Aorta (tissue), 5 donors: ENCODE measurements at regions of chrX and their contacts with region 1.

Region 1: GRCh38 chrX:55160685-55161552 is 59.2 kb upstream of the PAGE5 start:
- DNase-seq: peak; percentile 94 to 95
- ATAC-seq: peak; percentile 99
- H3K4me3 ChIP-seq: peak overlapping the region; percentile 28 to 29
- H3K27ac ChIP-seq: peak overlapping the region in 1 of 2 donors; percentile 58
- H3K4me1 ChIP-seq: no peaks in the 10 kb centered on the region
- H3K27me3 ChIP-seq: no peaks in the 10 kb centered on the region

Region 2: DNA sequence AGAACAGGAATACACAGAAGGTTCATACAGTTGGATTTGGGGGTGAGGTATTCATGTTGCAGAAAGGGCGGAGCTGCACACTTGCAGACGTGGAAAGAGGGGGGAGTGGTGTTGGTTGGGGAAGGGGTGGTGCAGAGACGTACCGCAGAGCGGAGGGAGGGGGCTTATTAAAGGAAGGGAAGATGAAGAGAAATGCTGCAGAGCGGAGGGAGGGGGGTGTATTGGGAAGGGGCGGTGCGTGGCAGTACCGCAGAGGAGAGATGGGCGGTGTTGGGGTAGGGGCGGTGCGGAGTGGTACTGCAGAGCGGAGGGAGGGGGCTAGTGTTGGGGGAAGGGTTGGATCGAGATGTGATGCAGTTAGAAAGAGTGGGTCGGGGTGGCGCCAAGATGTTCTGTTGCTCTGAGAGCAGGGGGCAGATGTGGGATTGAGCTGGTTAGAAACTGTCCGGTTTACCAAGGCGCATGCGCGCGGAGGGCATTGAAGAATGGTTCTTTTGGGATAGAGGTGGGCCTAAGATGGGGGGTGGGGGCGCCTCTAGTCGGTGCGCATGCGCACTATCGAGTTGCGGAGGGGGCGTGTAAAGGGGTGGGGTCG is 239.4 kb before region 1 on chrX:
- intact Hi-C with region 1: loop called in 1 of 2 experiments (anchors 10 kb)
- DNase-seq: peak; percentile 81 to 88
- ATAC-seq: peak; percentile 88
- H3K4me3 ChIP-seq: peak overlapping the region; percentile 15 to 33
- H3K27ac ChIP-seq: no peak overlapping the region
- H3K4me1 ChIP-seq: no peaks in the 10 kb centered on the region
- H3K27me3 ChIP-seq: no peaks in the 10 kb centered on the region

Region 3: GRCh38 chrX:54934890-54935289 is 226.0 kb before region 1 on chrX:
- intact Hi-C with region 1: no loop called
- DNase-seq: no peak
- ATAC-seq: no peak
- H3K4me3 ChIP-seq: no peak overlapping the region
- H3K27ac ChIP-seq: no peak overlapping the region
- H3K4me1 ChIP-seq: no peaks in the 10 kb centered on the region
- H3K27me3 ChIP-seq: no peaks in the 10 kb centered on the region

Region 4: DNA sequence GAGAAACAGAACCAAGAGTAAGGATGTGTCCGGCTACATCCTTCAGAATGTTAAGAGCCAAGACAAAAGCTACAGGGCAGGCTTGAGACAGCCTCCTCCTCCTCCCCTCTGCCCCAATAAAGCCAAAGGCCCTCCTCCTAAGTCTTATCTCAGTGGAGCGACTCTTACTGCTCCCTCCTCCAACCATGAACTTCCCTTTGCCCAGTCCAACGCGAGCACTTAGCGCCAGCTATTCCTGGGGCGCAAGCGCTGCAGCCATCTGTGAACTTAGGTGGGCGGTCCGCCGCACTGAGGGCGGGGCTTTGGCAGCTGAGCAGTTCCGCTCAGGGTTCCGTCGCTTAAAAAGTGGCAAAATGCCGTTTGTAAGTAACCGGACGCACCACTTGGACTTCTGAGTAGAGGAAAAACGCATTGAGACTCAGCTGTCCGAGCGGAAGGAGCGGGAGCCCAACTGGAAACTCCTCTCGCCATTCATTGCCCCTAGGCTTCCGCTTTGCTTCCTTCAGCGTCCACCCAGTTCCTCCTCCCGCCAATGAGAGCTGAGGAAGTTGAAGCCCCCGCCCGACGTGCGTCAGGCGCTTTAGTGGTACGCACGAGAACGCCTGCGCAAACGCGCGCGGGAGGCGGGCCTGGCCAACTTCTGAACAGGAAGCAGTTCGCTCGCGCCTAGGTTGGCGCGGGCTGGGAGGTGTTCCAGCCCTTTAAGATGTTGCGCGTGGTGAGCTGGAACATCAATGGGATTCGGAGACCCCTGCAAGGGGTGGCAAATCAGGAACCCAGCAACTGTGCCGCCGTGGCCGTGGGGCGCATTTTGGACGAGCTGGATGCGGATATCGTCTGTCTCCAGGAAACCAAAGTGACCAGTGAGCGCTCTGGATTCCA is 161.0 kb before region 1 on chrX and contains the start of gene APEX2:
- intact Hi-C with region 1: loop called (anchors 10 kb)
- DNase-seq: peak; percentile 96
- ATAC-seq: peak; percentile 95
- H3K4me3 ChIP-seq: peak within 1 kb of the TSS; percentile 27 to 53
- H3K27ac ChIP-seq: peak within 1 kb of the TSS in 1 of 2 donors; percentile 56
- H3K4me1 ChIP-seq: no peaks in the 10 kb centered on the region
- H3K27me3 ChIP-seq: no peaks in the 10 kb centered on the region
- total RNA-seq, gene APEX2: 9.9 to 10.1 TPM

Region 5: DNA sequence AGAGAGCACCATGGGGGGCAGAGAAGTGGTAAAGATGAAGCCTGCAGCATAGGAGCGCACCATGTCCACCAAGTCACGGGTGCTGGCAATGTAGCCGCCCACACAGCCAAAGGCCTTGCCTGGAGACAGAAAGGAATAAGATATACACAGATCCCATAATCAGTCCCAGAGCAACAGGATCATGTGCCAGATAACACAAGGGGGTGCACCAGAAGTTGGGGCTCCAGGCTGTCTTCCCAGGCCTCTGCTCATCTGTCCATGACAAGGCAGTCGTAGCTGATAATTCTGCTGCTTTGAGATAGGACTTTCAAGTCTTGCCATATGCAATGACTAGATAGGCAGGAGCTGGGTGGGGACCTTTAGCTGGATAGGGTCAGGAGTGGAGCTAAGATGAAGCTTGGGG is 146.0 kb before region 1 on chrX:
- intact Hi-C with region 1: no loop called
- DNase-seq: no peak
- ATAC-seq: no peak
- H3K4me3 ChIP-seq: no peak overlapping the region
- H3K27ac ChIP-seq: no peak overlapping the region
- H3K4me1 ChIP-seq: no peaks in the 10 kb centered on the region
- H3K27me3 ChIP-seq: no peaks in the 10 kb centered on the region

Region 6: DNA sequence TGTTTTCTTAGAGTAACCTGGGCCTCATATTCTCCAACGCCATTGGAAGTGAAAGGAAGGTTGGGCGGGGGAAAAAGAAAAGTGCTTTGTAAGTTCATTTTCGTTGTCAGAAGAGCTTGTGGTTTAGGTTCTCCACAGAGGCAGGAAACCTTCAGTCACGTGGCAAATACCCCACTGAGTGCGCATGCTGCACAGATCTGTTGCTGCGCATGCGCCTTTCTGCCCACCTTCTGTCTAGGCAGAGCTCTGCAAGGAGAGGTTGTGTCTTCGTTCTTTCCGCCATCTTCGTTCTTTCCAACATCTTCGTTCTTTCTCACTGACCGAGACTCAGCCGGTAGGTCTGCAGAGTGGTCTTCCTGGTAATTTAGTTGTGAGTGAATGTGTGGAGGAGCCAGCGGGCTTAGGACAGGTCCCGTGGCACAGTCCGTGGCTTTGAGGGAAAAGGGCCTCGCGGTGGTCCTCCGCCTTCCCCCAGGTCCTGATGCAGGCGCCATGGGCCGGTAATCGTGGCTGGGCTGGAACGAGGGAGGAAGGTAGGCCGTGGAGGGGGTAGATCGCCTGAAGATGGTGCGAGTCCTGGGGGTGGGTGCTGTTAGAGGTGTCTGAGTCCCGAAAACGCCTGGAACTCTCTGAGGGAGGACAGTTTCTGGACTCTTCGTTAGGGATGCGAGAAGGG is 59.3 kb after region 1 on chrX and contains the start of gene PAGE5:
- intact Hi-C with region 1: no loop called
- DNase-seq: no peak
- ATAC-seq: no peak
- H3K4me3 ChIP-seq: no peak within 1 kb of the TSS
- H3K27ac ChIP-seq: no peak within 1 kb of the TSS
- H3K4me1 ChIP-seq: no peaks in the 10 kb centered on the region
- H3K27me3 ChIP-seq: no peaks in the 10 kb centered on the region
- total RNA-seq, gene PAGE5: not detected

Region 7: DNA sequence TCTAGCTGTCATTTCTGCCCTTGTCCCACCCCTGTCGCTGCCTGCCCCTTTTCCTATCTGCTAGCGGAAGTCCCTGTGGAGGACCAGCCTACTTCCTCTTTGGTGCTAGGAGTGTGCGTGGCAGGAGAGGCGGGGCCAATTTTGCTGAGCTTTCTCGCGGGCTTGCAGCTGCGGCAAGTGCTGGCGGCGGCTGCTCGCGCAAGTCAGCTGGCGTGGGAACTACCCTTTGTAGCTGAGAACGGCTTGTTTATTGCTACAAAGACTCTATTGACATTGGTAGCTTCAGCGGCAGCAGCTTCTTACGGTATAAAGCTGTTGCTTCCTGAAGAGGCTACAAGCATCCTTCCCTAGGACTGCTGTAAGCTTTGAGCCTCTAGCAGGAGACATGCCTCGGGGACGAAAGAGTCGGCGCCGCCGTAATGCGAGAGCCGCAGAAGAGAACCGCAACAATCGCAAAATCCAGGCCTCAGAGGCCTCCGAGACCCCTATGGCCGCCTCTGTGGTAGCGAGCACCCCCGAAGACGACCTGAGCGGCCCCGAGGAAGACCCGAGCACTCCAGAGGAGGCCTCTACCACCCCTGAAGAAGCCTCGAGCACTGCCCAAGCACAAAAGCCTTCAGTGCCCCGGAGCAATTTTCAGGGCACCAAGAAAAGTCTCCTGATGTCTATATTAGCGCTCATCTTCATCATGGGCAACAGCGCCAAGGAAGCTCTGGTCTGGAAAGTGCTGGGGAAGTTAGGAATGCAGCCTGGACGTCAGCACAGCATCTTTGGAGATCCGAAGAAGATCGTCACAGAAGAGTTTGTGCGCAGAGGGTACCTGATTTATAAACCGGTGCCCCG is 291.3 kb after region 1 on chrX and contains the start of gene MAGEH1:
- intact Hi-C with region 1: loop called in 1 of 2 experiments (anchors 10 kb)
- DNase-seq: peak; percentile 91 to 92
- ATAC-seq: peak; percentile 93
- H3K4me3 ChIP-seq: peak within 1 kb of the TSS; percentile 79 to 97
- H3K27ac ChIP-seq: peak within 1 kb of the TSS in 1 of 2 donors; percentile 95
- H3K4me1 ChIP-seq: no peaks in the 10 kb centered on the region
- H3K27me3 ChIP-seq: no peaks in the 10 kb centered on the region
- total RNA-seq, gene MAGEH1: 32.3 to 37.2 TPM